ENCODE measurements at regions of chr12 and their contacts with region 1.

Region 1: DNA sequence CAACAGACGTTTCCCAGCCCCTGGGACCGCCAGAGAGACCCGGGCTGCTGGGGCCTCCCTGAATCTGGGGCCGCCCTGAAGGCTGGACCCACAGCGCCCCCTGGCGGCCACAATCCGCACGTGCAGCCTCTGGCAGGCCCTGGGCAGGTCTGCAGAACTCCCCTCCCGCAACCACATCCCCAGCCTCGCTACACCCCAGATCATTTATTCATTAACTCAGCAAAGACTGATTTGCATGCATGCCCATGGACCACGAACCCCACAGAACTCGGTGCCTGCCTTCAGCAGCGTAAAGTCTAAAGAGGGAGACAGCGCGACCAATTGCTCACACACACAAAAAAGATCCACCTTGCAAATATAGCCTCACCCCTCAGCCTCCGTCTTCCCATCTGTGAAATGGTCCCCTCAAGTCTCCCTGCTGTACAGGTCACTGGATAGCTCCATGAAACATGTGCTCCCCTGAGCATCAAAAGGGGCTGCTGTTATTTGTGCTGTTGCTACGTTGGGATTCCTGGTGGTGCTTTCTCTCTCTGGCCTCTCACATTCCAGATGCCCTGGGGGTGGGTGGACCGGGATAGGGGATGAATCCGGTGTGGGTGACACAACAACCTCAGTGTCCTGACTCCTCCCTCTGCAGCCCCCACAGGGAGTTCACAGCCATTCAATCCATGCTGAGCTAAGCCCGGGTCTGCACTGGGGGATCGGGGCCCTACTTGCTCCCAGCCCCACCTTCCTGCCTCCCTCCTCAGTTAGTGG is 96.4 kb downstream of the SCARB1 start:
- DNase-seq: no peak
- H3K4me3 ChIP-seq: no peak overlapping the region
- H3K27me3 ChIP-seq: no peaks in the 10 kb centered on the region; the same call in 1 of the 2 replicates
- CTCF ChIP-seq: peak; percentile 98

Region 2: GRCh38 chr12:124053851-124054250 is 713.4 kb before region 1 on chr12:
- CTCF ChIA-PET with region 1: interaction called, 16 read pairs
- POLR2A ChIA-PET with region 1: no interaction called
- DNase-seq: no peak
- H3K4me3 ChIP-seq: no peak overlapping the region
- H3K27me3 ChIP-seq: no peaks in the 10 kb centered on the region; the same call in 1 of the 2 replicates
- CTCF ChIP-seq: peak; percentile 83

Region 3: GRCh38 chr12:124379938-124380754 is 387.1 kb before region 1 on chr12:
- CTCF ChIA-PET with region 1: interaction called, 10 read pairs
- POLR2A ChIA-PET with region 1: no interaction called
- DNase-seq: no peak
- H3K4me3 ChIP-seq: no peak overlapping the region
- H3K27me3 ChIP-seq: no peaks in the 10 kb centered on the region
- CTCF ChIP-seq: peak; percentile 72

Region 4: GRCh38 chr12:124694846-124695497 is 72.3 kb before region 1 on chr12:
- CTCF ChIA-PET with region 1: interaction called, 11 read pairs
- POLR2A ChIA-PET with region 1: no interaction called
- DNase-seq: peak; percentile 82
- H3K4me3 ChIP-seq: no peak overlapping the region
- H3K27me3 ChIP-seq: 0 out of 2 replicates have a peak, but pooled peaks cover 4% of the 10 kb centered on the region
- CTCF ChIP-seq: 0 out of 2 replicates have a peak, but pooled peaks have one; percentile 5

Region 5: GRCh38 chr12:124754949-124755800 is 12.1 kb before region 1 on chr12:
- CTCF ChIA-PET with region 1: interaction called, 24 read pairs
- POLR2A ChIA-PET with region 1: no interaction called
- DNase-seq: peak; percentile 88
- H3K4me3 ChIP-seq: no peak overlapping the region
- H3K27me3 ChIP-seq: no peaks in the 10 kb centered on the region; the same call in 1 of the 2 replicates
- CTCF ChIP-seq: 0 out of 2 replicates have a peak, but pooled peaks have one; percentile 5

Measured in BJ (cell line).